Mammary epithelial cell (primary cell): ENCODE measurements at regions of chr16 and their contacts with region 1.

Region 1: GRCh38 chr16:81143921-81144500 is 47.8 kb upstream of the GCSH start:
- DNase-seq: peak; percentile 97
- H3K4me3 ChIP-seq: no peak overlapping the region
- H3K27ac ChIP-seq: peak overlapping the region; percentile 60
- H3K4me1 ChIP-seq: peaks cover 26% of the 10 kb centered on the region
- H3K27me3 ChIP-seq: no peaks in the 10 kb centered on the region
- CTCF ChIP-seq: no peak

Region 2: DNA sequence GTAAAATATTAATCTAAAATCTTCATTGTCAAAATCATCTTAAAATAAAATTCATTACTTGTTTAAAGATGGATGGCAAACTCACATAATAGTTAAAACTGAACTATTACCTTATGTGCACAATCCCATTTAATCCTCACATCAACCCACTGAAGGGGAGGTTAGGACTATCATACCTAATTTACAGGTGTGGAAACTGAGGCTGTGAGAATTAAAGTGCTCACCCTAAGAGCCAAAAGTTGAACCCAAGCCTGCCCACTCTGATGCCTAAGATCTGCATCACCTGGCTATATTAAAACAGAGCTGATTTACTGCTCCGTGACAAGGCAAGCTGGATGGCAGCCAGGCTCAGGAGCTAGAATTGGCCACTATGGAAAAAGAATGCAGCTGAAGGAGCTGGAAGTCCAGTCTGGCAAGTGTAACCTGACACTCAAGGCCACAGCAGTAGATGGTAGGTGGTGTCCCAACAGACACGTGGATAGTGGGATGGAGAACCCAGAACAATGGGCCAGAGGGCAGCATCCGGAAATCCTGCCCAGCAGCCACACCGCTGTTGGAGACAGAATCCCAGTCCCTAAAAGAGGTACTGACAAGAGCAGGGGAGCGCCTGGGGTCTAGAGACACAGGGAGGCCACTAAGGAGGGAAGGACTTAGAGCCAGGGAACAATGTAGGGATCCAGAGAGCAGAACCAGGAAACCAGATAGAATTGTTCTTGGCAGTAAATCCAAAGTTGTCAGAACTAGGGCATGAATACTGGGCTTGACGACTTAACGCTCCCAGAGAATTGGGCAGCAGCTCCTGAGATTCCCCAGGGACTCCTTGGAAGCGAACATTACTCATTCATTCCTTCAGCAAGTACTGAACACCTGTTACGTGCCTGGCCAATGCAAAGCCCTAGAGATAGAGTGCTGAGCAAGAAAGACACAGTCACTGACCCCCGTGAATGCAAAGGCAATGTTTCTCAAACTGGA is 425.5 kb before region 1 on chr16:
- CTCF ChIA-PET with region 1: no interaction called
- dilution Hi-C with region 1: no loop called
- in situ Hi-C with region 1: no loop called
- intact Hi-C with region 1: no loop called
- DNase-seq: peak; percentile 25
- H3K4me3 ChIP-seq: no peak overlapping the region
- H3K27ac ChIP-seq: no peak overlapping the region
- H3K4me1 ChIP-seq: no peaks in the 10 kb centered on the region
- H3K27me3 ChIP-seq: no peaks in the 10 kb centered on the region
- CTCF ChIP-seq: no peak

Region 3: GRCh38 chr16:81095953-81096717 is 47.9 kb before region 1 on chr16 and contains the start of gene GCSH:
- CTCF ChIA-PET with region 1: no interaction called
- dilution Hi-C with region 1: loop called (anchors 5 kb)
- in situ Hi-C with region 1: no loop called
- intact Hi-C with region 1: loop called (anchors 1 kb)
- DNase-seq: peak; percentile 99
- H3K4me3 ChIP-seq: peak within 1 kb of the TSS; percentile 85 to 95 (median 92)
- H3K27ac ChIP-seq: peak within 1 kb of the TSS; percentile 74
- H3K4me1 ChIP-seq: peaks cover 7% of the 10 kb centered on the region
- H3K27me3 ChIP-seq: no peaks in the 10 kb centered on the region
- CTCF ChIP-seq: no peak
- total RNA-seq, gene GCSH: 27.5 to 41.9 TPM

Region 4: GRCh38 chr16:81127051-81127450 is 17.0 kb before region 1 on chr16:
- CTCF ChIA-PET with region 1: no interaction called
- dilution Hi-C with region 1: no loop called
- in situ Hi-C with region 1: no loop called
- intact Hi-C with region 1: loop called (anchors 1 kb)
- DNase-seq: peak; percentile 97
- H3K4me3 ChIP-seq: no peak overlapping the region
- H3K27ac ChIP-seq: no peak overlapping the region
- H3K4me1 ChIP-seq: peaks cover 13% of the 10 kb centered on the region
- H3K27me3 ChIP-seq: no peaks in the 10 kb centered on the region
- CTCF ChIP-seq: no peak

Region 5: DNA sequence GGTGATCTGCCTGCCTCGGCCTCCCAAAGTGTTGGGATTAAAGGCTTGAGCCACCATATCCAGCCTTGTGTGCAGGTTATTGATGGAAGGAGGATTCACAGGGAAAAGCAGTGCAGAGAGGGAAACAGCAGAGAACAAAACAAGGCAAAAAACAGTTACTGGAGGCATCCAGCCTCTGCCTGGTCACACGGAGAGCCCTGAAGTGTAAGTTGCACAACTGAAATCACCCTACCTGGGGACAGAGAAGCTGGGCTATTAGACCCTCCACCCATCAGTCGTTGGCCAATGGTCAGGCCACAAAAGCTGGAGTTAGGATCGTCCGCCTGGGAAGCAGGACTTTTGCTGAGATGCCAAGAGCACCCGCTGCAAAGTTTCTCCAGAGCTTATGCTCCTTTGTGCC is 36.6 kb after region 1 on chr16:
- CTCF ChIA-PET with region 1: no interaction called
- dilution Hi-C with region 1: no loop called
- in situ Hi-C with region 1: no loop called
- intact Hi-C with region 1: no loop called
- DNase-seq: no peak
- H3K4me3 ChIP-seq: no peak overlapping the region
- H3K27ac ChIP-seq: peak overlapping the region; percentile 40
- H3K4me1 ChIP-seq: peaks cover 10% of the 10 kb centered on the region
- H3K27me3 ChIP-seq: no peaks in the 10 kb centered on the region
- CTCF ChIP-seq: no peak

Region 6: DNA sequence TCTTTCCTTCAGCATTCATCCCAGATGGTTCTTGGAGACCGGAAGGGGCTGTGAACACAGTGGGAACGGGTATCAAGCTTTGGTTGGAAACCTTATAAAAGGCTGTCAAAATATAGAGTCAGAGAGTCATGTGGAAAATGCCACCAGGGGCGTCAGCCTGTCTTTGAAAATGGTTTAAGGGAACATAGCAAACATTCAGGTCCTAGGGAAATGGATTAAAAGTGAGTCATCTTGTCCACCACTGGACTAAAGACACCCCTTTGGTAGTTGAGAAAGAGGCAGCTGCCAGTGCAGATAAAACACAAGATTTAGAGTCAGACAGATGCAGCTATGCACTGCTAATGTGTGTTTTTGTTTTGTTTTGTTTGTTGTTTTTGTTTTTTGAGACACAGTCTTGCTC is 46.7 kb after region 1 on chr16:
- CTCF ChIA-PET with region 1: no interaction called
- dilution Hi-C with region 1: loop called (anchors 5 kb)
- in situ Hi-C with region 1: no loop called
- intact Hi-C with region 1: no loop called
- DNase-seq: peak; percentile 22
- H3K4me3 ChIP-seq: no peak overlapping the region
- H3K27ac ChIP-seq: no peak overlapping the region
- H3K4me1 ChIP-seq: no peaks in the 10 kb centered on the region
- H3K27me3 ChIP-seq: peaks cover 1% of the 10 kb centered on the region
- CTCF ChIP-seq: no peak

Region 7: GRCh38 chr16:81293909-81294823 is 150.2 kb after region 1 on chr16:
- CTCF ChIA-PET with region 1: no interaction called
- dilution Hi-C with region 1: loop called (anchors 5 kb)
- in situ Hi-C with region 1: no loop called
- intact Hi-C with region 1: no loop called
- DNase-seq: peak; percentile 74
- H3K4me3 ChIP-seq: no peak overlapping the region
- H3K27ac ChIP-seq: no peak overlapping the region
- H3K4me1 ChIP-seq: peaks cover 17% of the 10 kb centered on the region
- H3K27me3 ChIP-seq: no peaks in the 10 kb centered on the region
- CTCF ChIP-seq: no peak